Right ventricle myocardium inferior (tissue), 1 donor: ENCODE measurements at regions of chr7 and their contacts with region 1.

Region 1: GRCh38 chr7:20158684-20159083 is 58.5 kb downstream of the MACC1 start:
- DNase-seq: no peak
- ATAC-seq: peak; percentile 75

Region 2: GRCh38 chr7:20310963-20311742 is 152.5 kb after region 1 on chr7:
- intact Hi-C with region 1: loop called (anchors 5 kb)
- DNase-seq: no peak
- ATAC-seq: no peak